Activated CD8-positive, alpha-beta memory T cell treated with anti-CD3 and anti-CD28 coated beads, Interleukin-2, amount 10 ng/mL, durations not matched to agents 7 days and 5 days (primary cell): ENCODE measurements at regions of chr7 and their contacts with region 1.

Region 1: GRCh38 chr7:30740424-30741181 is 11.3 kb upstream of the INMT start:
- DNase-seq: peak; percentile 81
- ATAC-seq: peak; percentile 59
- H3K4me3 Mint-ChIP-seq: no peak overlapping the region
- H3K27ac Mint-ChIP-seq: no peak overlapping the region
- H3K4me1 Mint-ChIP-seq: peaks cover 35% of the 10 kb centered on the region
- H3K27me3 Mint-ChIP-seq: no peaks in the 10 kb centered on the region

Region 2: GRCh38 chr7:30445770-30446169 is 294.8 kb before region 1 on chr7:
- CTCF ChIA-PET with region 1: no interaction called
- DNase-seq: peak; percentile 86
- ATAC-seq: peak; percentile 97
- H3K4me3 Mint-ChIP-seq: no peak overlapping the region
- H3K27ac Mint-ChIP-seq: peak overlapping the region; percentile 22
- H3K4me1 Mint-ChIP-seq: peaks cover 4% of the 10 kb centered on the region
- H3K27me3 Mint-ChIP-seq: no peaks in the 10 kb centered on the region

Region 3: DNA sequence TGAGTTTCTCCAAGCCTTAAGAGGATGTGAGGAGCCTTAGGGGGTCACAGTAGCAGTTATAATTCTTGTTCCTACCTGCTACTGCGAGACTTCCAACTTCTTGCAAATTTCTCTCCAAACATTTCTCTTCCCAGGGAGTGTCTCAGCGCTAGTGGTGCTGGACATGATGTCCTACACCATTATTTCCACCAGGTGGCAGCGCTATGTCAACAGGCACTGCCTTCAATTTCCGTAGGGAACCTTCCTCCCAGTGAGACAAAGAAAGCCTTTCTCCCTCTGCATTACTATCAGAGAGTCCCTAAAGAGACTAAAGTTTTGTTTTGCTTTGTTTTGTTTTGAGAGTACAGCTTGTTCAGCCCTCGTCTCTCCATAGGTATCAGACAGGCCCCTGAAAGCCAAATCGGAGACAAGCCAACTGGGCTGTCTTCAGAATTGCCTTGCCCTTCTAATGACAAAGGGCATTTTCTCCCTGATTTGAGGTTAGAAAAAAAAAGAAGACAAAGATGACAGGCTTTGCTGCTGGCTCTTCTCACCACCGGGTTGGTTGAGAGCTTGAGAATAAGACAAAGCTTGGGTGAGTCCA is 191.8 kb before region 1 on chr7:
- CTCF ChIA-PET with region 1: interaction called, 22 read pairs
- DNase-seq: peak; percentile 55
- ATAC-seq: no peak
- H3K4me3 Mint-ChIP-seq: no peak overlapping the region
- H3K27ac Mint-ChIP-seq: no peak overlapping the region
- H3K4me1 Mint-ChIP-seq: peaks cover 4% of the 10 kb centered on the region
- H3K27me3 Mint-ChIP-seq: no peaks in the 10 kb centered on the region

Region 4: GRCh38 chr7:30627026-30627425 is 113.6 kb before region 1 on chr7:
- CTCF ChIA-PET with region 1: interaction called, 11 read pairs
- DNase-seq: no peak
- ATAC-seq: peak; percentile 53
- H3K4me3 Mint-ChIP-seq: no peak overlapping the region
- H3K27ac Mint-ChIP-seq: peak overlapping the region; percentile 26
- H3K4me1 Mint-ChIP-seq: peaks cover 15% of the 10 kb centered on the region
- H3K27me3 Mint-ChIP-seq: no peaks in the 10 kb centered on the region

Region 5: DNA sequence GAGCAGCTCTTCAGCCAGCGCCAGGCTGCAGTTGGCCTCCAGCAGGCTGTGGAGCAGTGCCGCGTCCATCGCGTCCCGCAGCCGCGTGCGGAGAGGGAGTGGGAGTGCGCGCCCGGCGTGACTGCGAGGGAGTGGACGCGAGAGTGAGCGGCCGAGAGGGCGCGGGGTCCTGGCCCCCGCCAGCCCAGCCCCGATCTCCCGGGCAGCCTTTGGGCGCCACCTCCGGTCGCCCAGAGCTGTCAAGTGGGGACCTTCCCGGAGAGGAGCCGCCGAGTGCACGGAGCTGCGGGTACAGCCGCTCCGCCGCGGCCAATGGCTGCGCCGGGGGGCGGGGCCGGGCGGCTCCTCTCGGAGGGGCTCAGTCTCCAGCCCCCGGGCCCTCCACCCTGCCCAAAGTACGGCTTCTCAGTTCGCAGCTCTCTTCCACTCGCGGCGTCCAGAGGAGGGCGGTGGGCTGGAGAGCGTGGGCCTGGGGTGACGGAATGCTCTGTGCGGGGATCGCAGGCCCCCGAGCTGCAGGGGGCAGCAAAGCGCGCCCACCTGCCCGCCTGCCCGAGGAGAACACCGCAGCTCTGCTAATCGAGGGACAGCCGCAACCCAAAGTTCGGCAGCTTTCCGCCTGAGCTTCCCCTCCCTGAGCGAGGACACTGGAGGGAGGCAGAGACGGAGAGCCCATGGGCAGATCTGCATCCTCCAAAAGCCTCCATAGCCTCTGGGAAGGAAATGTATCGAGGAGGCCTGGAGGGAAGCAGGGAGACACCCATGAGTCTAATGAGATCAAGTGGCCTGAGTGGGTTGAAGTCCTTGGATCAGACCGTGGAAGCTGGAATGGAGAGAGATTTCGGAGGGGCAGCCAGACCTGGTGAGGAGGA is 58.2 kb before region 1 on chr7 and contains the start of gene CRHR2:
- CTCF ChIA-PET with region 1: interaction called, 24 read pairs
- DNase-seq: no peak
- ATAC-seq: peak; percentile 64
- H3K4me3 Mint-ChIP-seq: peak within 1 kb of the TSS; percentile 30
- H3K27ac Mint-ChIP-seq: no peak within 1 kb of the TSS
- H3K4me1 Mint-ChIP-seq: peaks cover 8% of the 10 kb centered on the region
- H3K27me3 Mint-ChIP-seq: peaks cover 67% of the 10 kb centered on the region
- total RNA-seq, gene CRHR2: not detected

Region 6: DNA sequence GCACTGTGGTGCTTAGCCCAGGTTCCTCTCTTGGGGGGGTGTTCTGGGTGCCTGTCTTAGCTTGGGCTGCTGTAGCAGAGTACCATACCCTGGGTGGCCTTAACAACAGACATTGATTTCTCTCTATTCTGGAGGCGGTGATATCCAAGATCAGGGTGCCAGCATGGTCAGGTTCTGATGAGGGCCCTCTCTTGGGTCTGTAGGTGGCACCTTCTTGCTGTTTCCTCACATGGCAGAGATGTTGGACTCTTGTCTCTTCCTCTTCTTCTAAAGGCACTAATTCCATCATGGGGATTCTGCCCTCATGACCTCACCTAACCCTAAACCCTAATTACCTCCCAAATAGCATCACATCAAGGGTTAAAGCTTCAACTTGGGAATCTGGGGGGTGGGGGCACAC is 38.4 kb before region 1 on chr7:
- CTCF ChIA-PET with region 1: interaction called, 166 read pairs
- DNase-seq: no peak
- ATAC-seq: peak; percentile 72
- H3K4me3 Mint-ChIP-seq: no peak overlapping the region
- H3K27ac Mint-ChIP-seq: no peak overlapping the region
- H3K4me1 Mint-ChIP-seq: peaks cover 2% of the 10 kb centered on the region
- H3K27me3 Mint-ChIP-seq: no peaks in the 10 kb centered on the region

Region 7: DNA sequence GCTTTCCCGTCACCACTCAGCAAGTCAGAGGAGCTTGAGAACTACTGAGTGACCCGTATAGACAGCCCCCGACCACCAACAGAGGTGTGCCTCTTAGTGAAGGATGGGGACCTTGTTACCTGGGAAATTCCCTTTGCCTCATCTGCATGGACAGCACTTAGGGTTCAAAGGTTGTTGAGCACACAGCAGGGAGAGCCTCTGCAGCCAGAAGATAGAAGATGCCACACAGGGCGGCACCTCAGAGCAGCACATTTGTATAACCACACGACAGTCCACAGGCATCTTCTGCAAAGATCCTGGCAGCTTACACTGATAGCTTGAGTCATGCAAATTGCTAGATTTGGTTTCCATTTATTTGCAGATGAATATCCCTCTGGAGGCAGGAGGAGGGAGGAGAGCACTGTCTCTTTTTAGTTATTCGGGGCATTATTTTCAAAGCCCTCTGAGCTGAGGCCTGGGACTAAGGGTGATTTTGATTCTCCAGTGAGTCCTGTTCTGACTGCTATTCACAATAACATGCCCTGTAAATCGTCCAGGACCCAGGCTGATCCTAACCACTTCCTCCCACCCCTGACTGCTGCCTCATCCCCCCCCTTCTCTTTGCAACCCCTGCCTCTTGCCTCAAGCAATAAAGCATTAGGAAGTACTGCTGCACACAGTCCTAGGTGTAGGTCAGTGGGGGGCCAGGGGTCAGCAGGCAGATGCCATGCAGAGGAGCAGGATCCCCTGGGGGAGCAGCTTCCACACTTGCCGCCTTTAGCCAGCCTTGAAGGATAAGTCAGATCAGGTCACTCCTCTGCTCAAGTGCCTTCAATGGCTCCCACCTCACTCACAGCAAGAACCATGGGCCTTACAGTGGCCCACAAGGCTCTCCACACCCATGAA is 13.3 kb before region 1 on chr7:
- CTCF ChIA-PET with region 1: interaction called, 130 read pairs
- DNase-seq: peak; percentile 88
- ATAC-seq: peak; percentile 93
- H3K4me3 Mint-ChIP-seq: peak overlapping the region; percentile 80
- H3K27ac Mint-ChIP-seq: peak overlapping the region; percentile 91
- H3K4me1 Mint-ChIP-seq: peaks cover 46% of the 10 kb centered on the region
- H3K27me3 Mint-ChIP-seq: no peaks in the 10 kb centered on the region

Region 8: DNA sequence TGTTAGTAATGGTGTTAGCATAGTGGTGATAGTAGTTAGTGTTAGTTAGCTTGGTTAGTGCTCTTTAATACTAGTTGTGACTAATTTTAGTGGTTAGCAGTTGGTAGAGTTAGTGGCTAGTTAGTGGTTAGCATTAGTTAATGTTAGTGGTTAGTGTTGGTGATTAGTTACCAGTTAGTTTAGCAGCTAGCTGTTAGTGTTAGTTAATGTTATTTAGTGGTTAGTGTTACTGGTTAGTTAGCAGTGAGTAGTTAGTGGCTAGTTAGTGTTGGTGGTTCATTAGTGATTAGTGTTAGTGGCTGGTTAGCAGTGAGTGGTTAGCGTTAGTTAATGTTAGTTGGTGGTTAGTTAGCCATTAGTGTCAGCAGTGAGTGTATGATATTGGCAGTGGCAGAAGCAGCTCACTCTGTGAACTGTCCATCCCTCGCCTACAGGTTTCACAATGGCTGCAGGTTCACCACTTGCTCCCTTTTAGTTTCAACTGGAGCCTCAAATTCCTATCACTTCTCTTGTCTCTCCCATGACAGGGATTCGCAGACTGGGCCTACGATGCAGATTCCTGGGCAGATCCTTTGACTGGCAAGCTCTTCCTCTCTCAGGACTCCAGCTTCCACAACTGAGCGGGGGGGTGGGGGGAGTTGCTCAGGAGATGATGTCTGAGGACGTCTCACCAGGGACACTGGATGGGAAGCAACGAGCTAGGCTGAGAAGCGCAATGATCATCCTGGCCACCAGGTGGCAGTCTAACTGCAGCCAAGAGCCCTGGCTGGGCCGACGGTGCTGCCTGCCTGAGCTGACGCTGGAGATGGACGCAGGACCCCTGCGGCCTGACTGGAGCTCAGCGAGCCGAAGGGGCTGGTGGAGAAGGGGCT is 242.7 kb after region 1 on chr7:
- CTCF ChIA-PET with region 1: no interaction called
- DNase-seq: peak; percentile 81
- ATAC-seq: peak; percentile 84
- H3K4me3 Mint-ChIP-seq: no peak overlapping the region
- H3K27ac Mint-ChIP-seq: no peak overlapping the region
- H3K4me1 Mint-ChIP-seq: peaks cover 5% of the 10 kb centered on the region
- H3K27me3 Mint-ChIP-seq: peaks cover 15% of the 10 kb centered on the region